Body of pancreas (tissue), 4 donors: ENCODE measurements at regions of chr6 and their contacts with region 1.

Region 1: GRCh38 chr6:56851541-56852259 is 103.2 kb upstream of the BEND6 start:
- DNase-seq: peak; percentile 23 to 60 (median 38)
- ATAC-seq: peak; percentile 84
- H3K4me3 ChIP-seq: no peak overlapping the region
- H3K27ac ChIP-seq: peak overlapping the region in 1 of 4 donors; percentile 18
- H3K4me1 ChIP-seq: peaks cover 6% of the 10 kb centered on the region
- H3K27me3 ChIP-seq: no peaks in the 10 kb centered on the region
- CTCF ChIP-seq: peak; percentile 13 to 69 (median 64)
- POLR2A ChIP-seq: peak in 1 of 3 donors; percentile 38

Region 2: DNA sequence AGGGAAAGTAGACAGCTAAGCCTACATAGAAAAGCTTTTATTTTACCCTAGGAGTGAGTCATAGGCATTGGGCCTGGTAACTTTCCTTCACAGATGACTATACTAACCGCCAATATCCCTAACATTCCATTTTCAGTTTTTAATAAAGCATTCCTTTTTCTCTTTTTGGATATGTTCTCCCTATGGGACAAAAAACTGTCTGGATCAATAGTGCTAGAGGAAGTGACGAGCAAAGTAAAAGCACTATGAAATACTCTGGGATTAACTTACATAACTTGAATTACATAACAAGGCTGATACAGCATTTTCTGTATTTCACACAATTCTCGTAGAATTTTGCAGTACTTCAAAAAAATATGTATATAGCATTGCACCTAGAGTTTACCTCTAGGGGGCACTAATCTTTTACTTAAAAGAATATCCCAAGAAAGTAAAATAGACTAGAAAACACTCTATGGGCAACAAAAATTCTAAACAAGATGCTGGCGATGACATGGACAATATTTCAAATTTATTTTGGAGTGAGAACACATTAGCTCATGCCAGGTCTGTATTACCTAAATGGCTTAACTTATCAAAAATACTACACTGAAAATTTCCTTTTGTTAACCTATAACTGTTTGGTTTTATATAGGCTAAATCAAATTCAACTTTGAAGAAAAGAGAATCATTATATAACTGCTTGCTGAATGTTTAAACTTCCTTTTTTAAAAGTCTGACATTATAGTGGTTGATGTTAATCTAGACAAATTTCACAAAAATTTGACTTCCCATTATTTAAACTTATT is 142.7 kb before region 1 on chr6:
- intact Hi-C with region 1: loop called (anchors 10 kb)
- DNase-seq: no peak
- ATAC-seq: peak; percentile 47
- H3K4me3 ChIP-seq: no peak overlapping the region
- H3K27ac ChIP-seq: peak overlapping the region in 1 of 4 donors; percentile 18
- H3K4me1 ChIP-seq: peaks cover 4% of the 10 kb centered on the region
- H3K27me3 ChIP-seq: no peaks in the 10 kb centered on the region
- CTCF ChIP-seq: peak; percentile 26 to 77 (median 64)
- POLR2A ChIP-seq: no peak